Activated CD4-positive, alpha-beta memory T cell treated with anti-CD3 and anti-CD28 coated beads for 36 hours (primary cell): ENCODE measurements at regions of chr2 and their contacts with region 1.

Region 1: DNA sequence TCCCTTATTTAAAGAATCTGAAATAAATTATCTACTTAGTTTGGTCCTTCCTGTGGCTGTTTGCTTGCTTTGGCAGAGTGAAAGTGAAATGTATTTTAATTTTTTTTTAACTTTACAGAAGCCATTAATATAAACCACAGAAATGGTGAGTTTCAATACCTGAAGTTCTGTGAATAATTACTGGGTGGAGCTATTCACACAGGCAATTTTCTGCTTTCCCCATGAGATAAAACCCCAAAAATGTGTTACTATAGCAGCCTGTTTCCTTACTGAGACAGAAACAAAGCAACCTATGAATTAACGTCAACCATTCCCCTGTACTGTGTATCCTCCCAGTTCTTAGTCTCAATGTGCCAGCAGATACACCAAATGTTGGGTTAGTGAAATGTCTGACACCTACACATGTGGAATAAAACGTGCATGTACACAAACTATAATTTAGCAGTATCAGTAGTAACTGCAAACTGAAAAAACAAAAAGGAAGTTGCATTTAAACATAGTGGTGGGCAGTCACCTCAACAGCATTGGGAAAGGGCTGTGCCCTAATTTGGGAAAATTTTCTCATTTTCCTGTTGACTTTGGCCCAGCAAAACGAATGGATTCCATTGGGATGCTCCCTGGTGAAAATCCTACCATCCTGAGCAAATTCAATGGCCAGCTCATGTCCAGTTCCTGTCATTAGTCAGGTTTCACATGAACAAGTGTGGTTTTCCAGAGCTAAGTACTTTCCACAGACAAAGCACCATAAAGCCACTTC is 73.1 kb upstream of the RMDN2 start:
- DNase-seq: no peak
- H3K4me3 Mint-ChIP-seq: peak overlapping the region; percentile 21
- H3K27ac Mint-ChIP-seq: peak overlapping the region; percentile 83
- H3K4me1 Mint-ChIP-seq: peaks cover 22% of the 10 kb centered on the region
- H3K27me3 Mint-ChIP-seq: no peaks in the 10 kb centered on the region

Region 2: DNA sequence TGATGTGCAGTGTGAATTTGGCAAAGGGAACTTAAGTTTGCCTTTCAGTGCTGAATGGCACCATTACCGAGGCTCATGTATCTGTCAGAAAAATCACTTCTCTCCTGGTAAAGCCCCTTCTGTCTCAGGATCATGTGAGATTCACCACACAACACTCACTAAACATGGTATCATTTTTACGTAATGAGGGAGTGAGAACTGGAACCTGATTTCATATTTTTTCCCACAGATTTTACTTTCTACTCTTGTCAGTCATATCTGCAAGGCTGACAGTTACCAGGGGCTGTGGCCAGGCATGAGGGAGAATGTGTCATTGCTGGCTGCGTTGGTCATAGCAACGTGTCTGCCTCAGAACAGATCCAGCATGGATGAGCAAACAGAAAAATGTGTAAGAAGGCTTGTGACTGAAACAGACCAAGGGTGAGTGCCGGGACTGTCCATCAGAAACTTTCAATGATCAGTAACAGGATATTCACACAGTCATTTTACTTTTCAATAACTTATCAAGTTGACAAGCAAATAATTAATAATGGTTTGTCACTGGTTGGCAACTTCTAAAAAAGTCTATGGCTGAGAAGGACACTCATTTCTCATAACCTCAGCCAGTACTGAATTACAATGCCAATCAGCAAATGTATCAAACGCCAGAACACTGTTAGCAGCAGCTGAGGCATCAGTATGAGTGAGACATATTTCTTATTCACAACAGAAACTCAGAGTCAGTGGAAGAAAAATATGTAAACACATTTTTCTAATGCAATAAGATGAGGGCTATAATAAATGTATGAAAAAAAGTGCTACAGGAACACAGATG is 281.0 kb before region 1 on chr2:
- CTCF ChIA-PET with region 1: no interaction called
- POLR2A ChIA-PET with region 1: no interaction called
- intact Hi-C with region 1: loop called (anchors 5 kb)
- DNase-seq: peak; percentile 85
- H3K4me3 Mint-ChIP-seq: no peak overlapping the region
- H3K27ac Mint-ChIP-seq: peak overlapping the region; percentile 16
- H3K4me1 Mint-ChIP-seq: peaks cover 29% of the 10 kb centered on the region
- H3K27me3 Mint-ChIP-seq: no peaks in the 10 kb centered on the region

Region 3: GRCh38 chr2:37871456-37872191 is 19.6 kb after region 1 on chr2:
- CTCF ChIA-PET with region 1: interaction called, 29 read pairs
- POLR2A ChIA-PET with region 1: interaction called, 13 read pairs
- intact Hi-C with region 1: loop called (anchors 1 kb)
- DNase-seq: no peak
- H3K4me3 Mint-ChIP-seq: peak overlapping the region; percentile 38
- H3K27ac Mint-ChIP-seq: peak overlapping the region; percentile 93
- H3K4me1 Mint-ChIP-seq: peaks cover 27% of the 10 kb centered on the region
- H3K27me3 Mint-ChIP-seq: no peaks in the 10 kb centered on the region

Region 4: GRCh38 chr2:38076606-38077430 is 224.8 kb after region 1 on chr2:
- CTCF ChIA-PET with region 1: no interaction called
- POLR2A ChIA-PET with region 1: no interaction called
- intact Hi-C with region 1: no loop called
- DNase-seq: peak; percentile 87
- H3K4me3 Mint-ChIP-seq: peak overlapping the region; percentile 70
- H3K27ac Mint-ChIP-seq: peak overlapping the region; percentile 76
- H3K4me1 Mint-ChIP-seq: peaks cover 17% of the 10 kb centered on the region
- H3K27me3 Mint-ChIP-seq: peaks cover 60% of the 10 kb centered on the region